ENCODE measurements at regions of chr13 and their contacts with region 1.

Region 1: DNA sequence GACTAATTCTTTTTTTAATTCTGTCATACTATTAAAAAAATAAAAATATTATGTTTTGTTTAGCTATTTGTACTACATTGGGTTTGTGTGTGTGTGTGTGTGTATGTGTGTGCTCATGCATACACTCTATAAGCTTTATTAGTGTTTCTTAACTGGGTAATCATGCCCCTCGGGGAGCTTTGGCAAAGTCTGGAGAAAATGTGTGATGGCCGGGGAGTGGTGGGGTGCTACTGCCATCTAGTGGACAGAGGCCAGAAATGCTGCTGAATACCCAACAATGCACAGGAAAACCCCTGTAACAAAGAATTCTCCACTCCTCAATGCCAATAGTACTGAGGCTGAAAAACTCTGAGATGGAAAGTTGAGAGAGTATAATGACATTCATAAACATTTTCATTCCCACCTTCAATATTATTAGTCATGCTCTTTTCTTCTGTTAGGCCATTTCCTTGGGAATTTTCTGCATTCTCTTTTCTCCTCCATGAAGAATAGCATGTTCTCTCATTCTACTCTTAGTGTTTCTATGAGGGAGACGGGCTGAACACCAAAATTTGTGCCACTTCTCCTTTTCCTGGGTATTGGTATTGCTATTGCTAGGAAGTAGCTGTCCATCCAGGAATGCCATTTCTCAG is 157.3 kb downstream of the DNAJC3 start:
- DNase-seq: peak; percentile 22 to 89 (median 70)

Region 2: DNA sequence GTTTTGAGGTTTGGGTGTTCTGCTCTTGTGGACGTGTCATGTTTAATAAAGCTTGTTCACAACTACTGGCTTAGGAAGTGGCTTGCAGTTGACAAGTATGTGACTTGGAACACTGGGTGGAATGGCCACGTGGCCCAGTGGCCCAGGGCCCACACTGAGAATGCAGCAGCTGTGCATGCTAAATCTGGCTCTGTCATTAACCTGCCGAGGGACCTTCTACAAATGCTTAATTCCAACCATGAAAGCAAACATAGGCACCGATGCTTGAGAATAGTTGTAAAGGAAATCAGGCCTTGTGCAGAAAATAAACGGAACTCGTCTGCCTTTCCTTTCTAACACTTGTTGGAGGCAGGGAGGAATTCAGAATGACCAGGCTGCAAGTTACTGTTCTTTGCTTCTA is 293.4 kb before region 1 on chr13:
- intact Hi-C with region 1: loop called (anchors 10 kb)
- DNase-seq: peak in 35 of 42 donors; percentile 30 to 77 (median 53)

Region 3: DNA sequence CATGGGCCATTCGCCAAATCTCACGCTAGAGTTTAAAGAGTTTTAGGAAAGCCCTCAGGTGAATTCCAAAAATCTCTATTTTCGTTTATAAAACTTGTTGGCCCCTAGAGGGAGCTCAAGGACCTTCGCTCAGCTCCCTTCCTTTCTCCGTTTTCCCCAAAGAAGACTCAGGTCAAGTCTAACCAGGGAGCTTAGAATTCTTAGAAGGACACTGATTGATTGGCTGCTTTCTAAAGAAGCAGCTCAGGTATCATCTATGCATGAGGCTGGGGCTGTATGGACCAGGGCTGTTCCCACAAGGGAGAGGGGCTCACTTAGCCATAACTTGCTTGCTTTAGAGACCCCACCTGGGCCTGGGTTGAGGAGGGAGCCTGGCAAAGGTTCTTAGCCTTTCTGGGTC is 210.2 kb before region 1 on chr13:
- intact Hi-C with region 1: loop called (anchors 5 kb)
- DNase-seq: peak in 21 of 42 donors; percentile 16 to 67 (median 34)

Measured in head of caudate nucleus (tissue), 42 donors.